Posterior cingulate gyrus (tissue), 11 donors: ENCODE measurements at regions of chr11 and their contacts with region 1.

Region 1: GRCh38 chr11:36265793-36266628 is 23.2 kb downstream of the COMMD9 start:
- DNase-seq: peak in 6 of 10 donors; percentile 46 to 91 (median 55)

Region 2: GRCh38 chr11:35485656-35486322 is 780.2 kb before region 1 on chr11:
- intact Hi-C with region 1: loop called (anchors 10 kb)
- DNase-seq: peak; percentile 70 to 96 (median 84)

Region 3: DNA sequence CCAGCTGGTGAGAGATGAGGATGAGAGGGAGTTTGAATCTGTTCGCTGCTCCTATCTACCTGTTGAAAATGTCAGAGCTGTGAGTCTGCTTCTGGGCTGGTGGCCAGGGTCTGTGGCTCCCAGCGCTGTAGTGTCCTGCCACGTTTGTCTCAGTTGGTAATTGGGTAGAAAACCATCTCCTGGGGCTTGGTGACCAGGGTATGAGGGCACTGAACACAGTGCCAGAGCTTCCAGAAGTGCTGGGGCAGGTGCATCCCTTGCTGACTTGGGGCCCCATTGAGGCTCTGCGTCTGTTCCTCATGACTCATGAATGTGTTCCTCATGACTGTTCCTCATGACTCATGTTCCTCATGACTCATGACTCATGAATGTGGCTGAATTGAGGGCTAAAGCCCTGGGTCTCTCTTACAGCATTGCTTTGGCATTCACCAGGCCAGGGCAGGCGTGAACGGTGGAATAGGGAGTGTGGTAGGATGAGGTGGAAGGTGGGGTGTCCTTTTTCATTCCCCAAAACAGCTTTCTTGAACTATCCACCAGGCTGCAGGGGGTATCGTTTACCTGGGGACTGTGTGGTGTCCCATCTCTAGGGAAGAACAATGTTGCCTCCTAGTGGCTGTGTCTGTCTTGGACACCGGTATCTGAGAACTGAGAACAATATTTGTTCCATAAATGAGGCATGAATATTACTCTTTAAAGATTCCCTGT is 116.3 kb before region 1 on chr11:
- intact Hi-C with region 1: loop called (anchors 10 kb)
- DNase-seq: peak in 2 of 10 donors; percentile 36 to 66

Region 4: DNA sequence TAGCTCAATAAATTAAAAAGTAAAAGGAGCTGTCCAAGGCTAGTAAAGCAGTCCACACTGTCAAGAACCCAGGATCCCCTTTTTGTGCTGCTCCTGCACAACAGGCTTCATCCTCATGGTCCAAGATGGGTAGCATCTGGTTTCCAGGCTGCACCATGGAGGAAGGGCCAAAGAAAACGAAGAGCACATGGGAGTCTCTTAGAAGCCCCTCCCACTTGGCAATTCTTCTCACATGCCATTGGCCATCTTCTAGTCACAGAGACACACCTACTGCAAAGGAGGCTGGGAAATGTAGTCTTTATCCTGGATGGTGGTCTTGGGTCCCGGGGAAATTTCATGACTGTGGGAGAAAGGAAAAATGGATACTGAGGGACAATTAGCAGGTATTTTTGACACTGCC is 67.9 kb after region 1 on chr11:
- intact Hi-C with region 1: no loop called
- DNase-seq: no peak